AG04449 (cell line): ENCODE measurements at regions of chr2 and their contacts with region 1.

Region 1: GRCh38 chr2:118855451-118856279 is 8.2 kb upstream of the EN1 start:
- DNase-seq: no peak
- H3K4me3 ChIP-seq: peak overlapping the region; percentile 60
- CTCF ChIP-seq: peak; percentile 98

Region 2: GRCh38 chr2:118202707-118203303 is 652.9 kb before region 1 on chr2:
- CTCF ChIA-PET with region 1: interaction called, 63 read pairs
- POLR2A ChIA-PET with region 1: no interaction called
- DNase-seq: no peak
- H3K4me3 ChIP-seq: no peak overlapping the region
- CTCF ChIP-seq: peak; percentile 88

Region 3: GRCh38 chr2:118265873-118266455 is 589.7 kb before region 1 on chr2:
- CTCF ChIA-PET with region 1: interaction called, 10 read pairs
- POLR2A ChIA-PET with region 1: no interaction called
- DNase-seq: no peak
- H3K4me3 ChIP-seq: no peak overlapping the region
- CTCF ChIP-seq: no peak

Region 4: DNA sequence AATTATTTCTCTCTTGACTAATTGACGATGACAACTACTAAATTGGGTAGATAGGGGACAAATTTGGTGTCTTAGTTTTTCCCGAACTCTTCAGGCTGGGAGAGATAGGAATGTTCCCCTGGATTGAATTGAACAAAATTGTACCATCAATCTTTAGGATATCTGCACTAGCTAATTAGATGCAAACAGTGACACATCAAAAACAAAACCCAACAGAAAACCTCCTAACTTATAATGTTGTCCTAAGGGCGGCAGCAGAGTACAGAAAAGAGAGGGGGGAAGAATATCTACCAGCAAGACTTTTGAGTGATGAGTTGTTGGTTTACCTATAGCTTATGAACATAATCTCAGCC is 424.5 kb before region 1 on chr2:
- CTCF ChIA-PET with region 1: interaction called, 43 read pairs
- POLR2A ChIA-PET with region 1: no interaction called
- DNase-seq: peak; percentile 9
- H3K4me3 ChIP-seq: no peak overlapping the region
- CTCF ChIP-seq: peak; percentile 21

Region 5: GRCh38 chr2:118548880-118549488 is 306.7 kb before region 1 on chr2:
- CTCF ChIA-PET with region 1: interaction called, 16 read pairs
- POLR2A ChIA-PET with region 1: no interaction called
- DNase-seq: no peak
- H3K4me3 ChIP-seq: no peak overlapping the region
- CTCF ChIP-seq: no peak

Region 6: DNA sequence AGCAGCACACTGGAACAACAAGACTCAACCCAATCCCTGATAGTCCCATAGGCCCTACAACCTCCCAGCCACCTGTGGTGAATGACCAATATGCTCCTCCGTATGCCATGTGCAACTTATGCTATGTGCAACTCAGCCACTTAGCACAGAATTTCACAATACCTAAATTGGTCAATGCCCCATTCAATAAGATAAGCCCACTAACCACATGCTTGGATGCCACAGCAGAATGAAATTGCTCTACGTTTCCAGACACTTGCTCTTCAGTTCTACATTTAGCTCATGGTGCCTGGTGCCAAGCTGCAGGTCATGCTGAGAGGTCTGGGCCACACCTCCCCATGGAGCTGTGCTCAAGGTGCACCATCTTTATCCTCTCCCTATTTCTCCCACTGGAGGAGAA is 168.0 kb before region 1 on chr2:
- CTCF ChIA-PET with region 1: no interaction called
- POLR2A ChIA-PET with region 1: no interaction called
- DNase-seq: no peak
- H3K4me3 ChIP-seq: no peak overlapping the region
- CTCF ChIP-seq: no peak

Region 7: GRCh38 chr2:118750959-118751565 is 104.6 kb before region 1 on chr2:
- CTCF ChIA-PET with region 1: interaction called, 10 read pairs
- POLR2A ChIA-PET with region 1: no interaction called
- DNase-seq: no peak
- H3K4me3 ChIP-seq: no peak overlapping the region
- CTCF ChIP-seq: no peak

Region 8: DNA sequence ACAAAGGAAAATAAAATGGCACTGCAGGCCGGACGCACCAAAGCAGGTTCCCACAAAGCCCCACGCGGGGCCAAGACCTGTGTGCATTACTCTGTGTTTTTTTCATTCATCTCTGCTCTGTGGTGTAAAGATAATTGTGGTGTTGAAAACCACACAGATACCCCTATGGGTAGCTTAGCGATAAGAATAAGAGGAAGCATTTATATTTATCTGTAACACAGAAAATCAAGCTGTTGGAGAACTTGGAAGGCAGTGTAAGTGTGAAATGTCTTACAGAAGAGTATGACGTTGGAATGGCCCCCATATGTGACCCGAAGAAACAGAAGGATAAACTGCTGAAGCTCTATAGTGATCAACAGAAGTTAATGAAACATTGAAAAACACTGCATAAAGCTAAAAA is 66.0 kb after region 1 on chr2:
- CTCF ChIA-PET with region 1: no interaction called
- POLR2A ChIA-PET with region 1: no interaction called
- DNase-seq: no peak
- H3K4me3 ChIP-seq: no peak overlapping the region
- CTCF ChIP-seq: no peak